Posterior vena cava (tissue), 2 donors: ENCODE measurements at regions of chr5 and their contacts with region 1.

Region 1: GRCh38 chr5:166845044-166845443 is 1446.4 kb upstream of the WWC1 start:
- DNase-seq: no peak

Region 2: DNA sequence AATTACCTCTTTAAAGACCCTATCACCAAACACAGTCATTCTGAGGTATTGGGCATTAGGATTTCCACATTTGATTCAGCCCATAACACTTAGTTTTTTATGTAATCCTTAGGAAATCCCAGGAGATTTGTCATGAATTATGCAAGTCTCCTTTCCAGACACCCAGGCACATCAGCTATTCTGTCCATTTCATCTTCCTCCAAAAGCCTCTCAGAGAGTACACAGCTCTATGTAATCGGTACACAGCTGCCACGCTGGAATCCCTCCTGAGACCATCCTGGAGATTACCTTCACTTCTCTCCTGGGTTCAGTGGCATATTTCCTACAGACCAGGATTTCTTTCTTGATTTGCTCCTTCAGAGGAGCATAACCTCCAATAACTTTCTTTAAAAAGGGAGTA is 863.4 kb before region 1 on chr5:
- intact Hi-C with region 1: loop called in 1 of 2 experiments (anchors 5 kb)
- DNase-seq: no peak